ENCODE measurements at regions of chr2 and their contacts with region 1.

Region 1: DNA sequence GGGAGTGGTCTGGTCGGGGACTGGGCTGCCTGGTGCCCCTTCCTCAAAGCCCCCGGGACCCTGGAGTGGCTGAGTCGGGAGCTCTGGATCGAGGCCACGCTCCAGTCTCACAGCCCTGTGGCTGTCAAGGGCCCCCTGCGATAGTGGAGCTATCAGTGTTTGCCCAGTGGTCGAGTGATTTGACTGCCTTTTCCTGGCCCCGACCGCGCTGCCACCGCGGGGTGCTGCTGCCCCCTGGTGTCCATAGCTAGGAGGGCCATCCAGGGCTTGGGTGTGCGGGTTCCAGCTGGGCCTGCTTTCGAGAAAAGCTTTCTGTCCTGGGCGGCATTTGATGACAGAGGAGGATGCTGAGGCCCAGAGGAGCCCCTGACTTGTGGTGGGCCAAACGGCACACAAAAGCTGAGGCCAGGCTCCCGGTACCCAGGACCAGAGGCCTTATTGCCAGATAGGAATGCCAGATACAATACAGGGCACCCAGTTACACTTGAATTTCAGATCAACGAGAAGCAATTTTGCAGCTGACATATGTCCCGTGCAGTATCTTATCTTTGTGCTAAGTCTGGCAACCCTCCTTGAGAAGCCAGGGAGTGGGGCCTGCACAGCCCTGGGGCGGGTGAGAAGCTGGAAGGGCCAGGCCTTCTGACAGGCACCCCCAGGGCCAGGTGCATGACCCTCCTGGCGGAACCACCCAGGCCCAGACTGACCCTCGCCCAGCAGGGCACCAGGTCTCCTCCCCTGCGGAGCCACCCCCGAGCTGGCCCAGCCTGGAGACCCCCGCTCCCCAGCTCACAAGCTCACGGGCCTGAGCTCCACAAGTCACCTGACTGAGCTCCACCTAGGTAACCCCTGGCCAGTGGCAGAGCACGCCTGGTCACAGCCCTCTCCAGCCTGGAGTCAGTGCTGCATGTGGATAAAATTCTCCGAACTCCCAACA is 13.0 kb downstream of the ODC1 start:
- DNase-seq: peak; percentile 79 to 94
- H3K4me3 ChIP-seq: no peak overlapping the region
- H3K27ac ChIP-seq: no peak overlapping the region
- H3K4me1 ChIP-seq: peaks cover 14 to 38% (median 23%) of the 10 kb centered on the region in 4 donors
- H3K27me3 ChIP-seq: peaks cover 0 to 14% (median 0%) of the 10 kb centered on the region in 3 donors
- CTCF ChIP-seq: peak in 6 of 7 experiments; percentile 71 to 97 (median 95)
- EP300 ChIP-seq: no peak
- POLR2A ChIP-seq: no peak

Region 2: DNA sequence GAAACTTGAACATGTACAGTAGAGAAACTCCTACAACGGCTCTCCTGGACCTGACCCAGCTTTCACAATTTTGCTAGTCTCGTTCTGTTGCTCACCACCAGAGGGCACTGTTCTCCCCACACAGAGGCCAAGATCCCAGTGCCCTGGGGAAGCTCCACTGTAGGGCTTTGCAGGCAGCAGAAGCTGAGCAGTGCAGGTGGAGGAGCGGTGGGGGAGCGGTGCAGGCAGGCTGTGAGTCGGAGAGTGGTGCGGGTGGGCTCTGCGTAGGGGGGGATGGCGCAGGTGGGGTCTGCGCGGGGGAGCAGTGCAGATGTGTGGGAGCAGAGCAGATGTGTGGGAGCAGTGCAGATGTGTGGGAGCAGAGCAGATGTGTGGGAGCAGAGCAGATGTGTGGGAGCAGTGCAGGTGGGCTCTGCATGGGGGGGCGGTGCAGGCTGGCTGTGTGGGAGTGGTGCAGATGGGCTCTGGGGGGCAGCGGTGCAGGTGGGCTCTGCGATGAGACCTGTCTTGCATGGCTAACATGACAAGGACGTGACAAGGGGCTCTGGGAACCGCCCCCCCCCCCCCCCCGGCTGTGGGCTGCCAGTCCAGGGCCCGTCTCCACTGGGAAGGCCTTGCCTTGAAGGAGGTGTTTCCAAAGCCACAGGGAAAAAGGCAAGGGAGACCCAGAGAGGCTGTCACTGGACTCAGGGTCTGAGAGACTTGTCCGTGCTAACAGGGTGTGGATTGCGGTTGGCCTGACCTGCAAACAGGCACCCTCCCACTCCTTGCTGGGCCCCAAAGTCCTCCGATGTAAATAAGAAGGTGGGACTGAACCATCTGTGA is 362.3 kb before region 1 on chr2:
- intact Hi-C with region 1: loop called (anchors 5 kb)
- DNase-seq: peak; percentile 86 to 96
- H3K4me3 ChIP-seq: no peak overlapping the region
- H3K27ac ChIP-seq: no peak overlapping the region
- H3K4me1 ChIP-seq: peaks cover 4 to 19% (median 7%) of the 10 kb centered on the region in 4 donors
- H3K27me3 ChIP-seq: peaks cover 0 to 46% (median under 1%) of the 10 kb centered on the region in 3 donors
- CTCF ChIP-seq: peak in 5 of 7 experiments; percentile 78 to 91 (median 86)
- EP300 ChIP-seq: no peak
- POLR2A ChIP-seq: no peak

Region 3: DNA sequence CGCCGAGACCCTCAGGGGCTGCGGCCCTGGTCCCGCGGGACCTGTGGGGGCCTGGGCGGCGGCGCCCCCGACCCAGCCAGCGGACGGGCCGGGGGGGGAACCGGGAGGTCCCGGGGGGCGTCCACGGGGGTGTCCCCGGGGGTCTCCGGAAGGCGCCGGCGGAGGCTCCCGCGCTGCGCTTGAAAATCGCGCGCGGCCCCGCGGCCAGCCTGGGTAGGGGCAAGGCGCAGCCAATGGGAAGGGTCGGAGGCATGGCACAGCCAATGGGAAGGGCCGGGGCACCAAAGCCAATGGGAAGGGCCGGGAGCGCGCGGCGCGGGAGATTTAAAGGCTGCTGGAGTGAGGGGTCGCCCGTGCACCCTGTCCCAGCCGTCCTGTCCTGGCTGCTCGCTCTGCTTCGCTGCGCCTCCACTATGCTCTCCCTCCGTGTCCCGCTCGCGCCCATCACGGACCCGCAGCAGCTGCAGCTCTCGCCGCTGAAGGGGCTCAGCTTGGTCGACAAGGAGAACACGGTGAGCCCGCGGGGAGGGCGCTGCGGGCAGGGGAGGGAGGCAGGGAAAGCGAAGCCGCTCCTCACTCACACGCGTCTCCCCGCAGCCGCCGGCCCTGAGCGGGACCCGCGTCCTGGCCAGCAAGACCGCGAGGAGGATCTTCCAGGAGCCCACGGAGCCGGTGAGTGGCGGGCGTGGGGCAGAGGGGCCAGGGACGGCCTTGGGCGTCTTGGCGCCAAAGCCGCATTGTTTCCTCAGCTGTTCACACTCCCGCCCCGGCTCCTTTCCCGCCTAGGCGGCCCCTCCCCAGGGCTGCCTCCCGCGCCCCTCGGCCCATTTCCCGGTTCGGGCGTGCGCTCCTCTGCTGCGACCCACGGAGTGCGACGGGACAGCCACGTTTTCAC is 312.5 kb before region 1 on chr2 and contains the start of gene RRM2:
- intact Hi-C with region 1: loop called (anchors 5 kb)
- DNase-seq: peak; percentile 93 to 98
- H3K4me3 ChIP-seq: peak within 1 kb of the TSS; percentile 56 to 81 (median 68)
- H3K27ac ChIP-seq: peak within 1 kb of the TSS in 3 of 5 donors; percentile 40 to 92 (median 79)
- H3K4me1 ChIP-seq: peaks cover 32 to 76% (median 41%) of the 10 kb centered on the region in 4 donors
- H3K27me3 ChIP-seq: peaks cover 4 to 18% (median 10%) of the 10 kb centered on the region in 3 donors
- CTCF ChIP-seq: no peak
- EP300 ChIP-seq: no peak
- POLR2A ChIP-seq: no peak
- total RNA-seq, gene RRM2: 1.2 to 30.3 (median 13.6) TPM

Region 4: GRCh38 chr2:10267551-10268465 is 167.3 kb before region 1 on chr2:
- intact Hi-C with region 1: no loop called
- DNase-seq: peak; percentile 71 to 90
- H3K4me3 ChIP-seq: no peak overlapping the region
- H3K27ac ChIP-seq: peak overlapping the region; percentile 49 to 71 (median 65)
- H3K4me1 ChIP-seq: peaks cover 26 to 41% (median 36%) of the 10 kb centered on the region in 4 donors
- H3K27me3 ChIP-seq: no peaks in the 10 kb centered on the region
- CTCF ChIP-seq: no peak
- EP300 ChIP-seq: no peak
- POLR2A ChIP-seq: no peak

Region 5: GRCh38 chr2:10487144-10488104 is 52.3 kb after region 1 on chr2:
- intact Hi-C with region 1: no loop called
- DNase-seq: peak; percentile 67 to 84
- H3K4me3 ChIP-seq: no peak overlapping the region
- H3K27ac ChIP-seq: peak overlapping the region in 1 of 5 donors; percentile 66
- H3K4me1 ChIP-seq: peaks cover 0 to 19% (median 7%) of the 10 kb centered on the region in 4 donors
- H3K27me3 ChIP-seq: peaks cover 0 to 16% (median 0%) of the 10 kb centered on the region in 3 donors
- CTCF ChIP-seq: no peak
- EP300 ChIP-seq: no peak
- POLR2A ChIP-seq: no peak

Region 6: GRCh38 chr2:11004199-11004598 is 569.0 kb after region 1 on chr2:
- intact Hi-C with region 1: no loop called
- DNase-seq: no peak
- H3K4me3 ChIP-seq: no peak overlapping the region
- H3K27ac ChIP-seq: no peak overlapping the region
- H3K4me1 ChIP-seq: no peaks in the 10 kb centered on the region
- H3K27me3 ChIP-seq: peaks cover 0 to 18% (median 0%) of the 10 kb centered on the region in 3 donors
- CTCF ChIP-seq: no peak
- EP300 ChIP-seq: no peak
- POLR2A ChIP-seq: no peak

Measured in stomach (tissue), 19 donors.